Mammary epithelial cell (primary cell): ENCODE measurements at regions of chr11 and their contacts with region 1.

Region 1: DNA sequence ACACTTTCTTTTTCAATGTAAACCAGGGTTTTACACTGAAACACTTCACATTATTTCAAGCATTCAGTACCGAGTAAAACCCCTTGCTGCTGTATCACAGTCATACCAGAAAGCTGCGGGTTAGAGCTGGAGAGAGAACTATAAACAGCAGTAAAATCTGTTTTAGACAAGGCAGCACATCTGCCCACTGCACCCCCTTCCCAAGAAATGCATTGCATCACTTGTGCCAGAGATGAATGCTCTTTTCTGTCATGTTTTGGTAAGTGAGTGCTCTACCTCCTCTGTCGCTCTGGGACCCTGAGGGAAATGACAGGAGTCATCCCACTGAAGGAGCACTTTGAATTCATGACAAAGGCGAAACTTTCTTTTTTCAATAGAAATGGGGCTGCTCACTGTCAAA is 107.2 kb downstream of the MAML2 start:
- DNase-seq: no peak
- H3K4me3 ChIP-seq: no peak overlapping the region
- H3K27ac ChIP-seq: no peak overlapping the region
- H3K4me1 ChIP-seq: peaks cover 19% of the 10 kb centered on the region
- H3K27me3 ChIP-seq: no peaks in the 10 kb centered on the region
- CTCF ChIP-seq: no peak

Region 2: GRCh38 chr11:96122601-96123074 is 113.1 kb before region 1 on chr11:
- CTCF ChIA-PET with region 1: no interaction called
- dilution Hi-C with region 1: no loop called
- in situ Hi-C with region 1: no loop called
- intact Hi-C with region 1: loop called (anchors 5 kb)
- DNase-seq: peak; percentile 98
- H3K4me3 ChIP-seq: no peak overlapping the region
- H3K27ac ChIP-seq: peak overlapping the region; percentile 67
- H3K4me1 ChIP-seq: peaks cover 19% of the 10 kb centered on the region
- H3K27me3 ChIP-seq: no peaks in the 10 kb centered on the region
- CTCF ChIP-seq: peak; percentile 29 to 32

Region 3: GRCh38 chr11:96155627-96156378 is 79.9 kb before region 1 on chr11:
- CTCF ChIA-PET with region 1: no interaction called
- dilution Hi-C with region 1: no loop called
- in situ Hi-C with region 1: no loop called
- intact Hi-C with region 1: no loop called
- DNase-seq: peak; percentile 93
- H3K4me3 ChIP-seq: no peak overlapping the region
- H3K27ac ChIP-seq: peak overlapping the region; percentile 92
- H3K4me1 ChIP-seq: peaks cover 41% of the 10 kb centered on the region
- H3K27me3 ChIP-seq: no peaks in the 10 kb centered on the region
- CTCF ChIP-seq: peak in 1 of 2 donors; percentile 34

Region 4: GRCh38 chr11:96293598-96294021 is 57.9 kb after region 1 on chr11:
- CTCF ChIA-PET with region 1: no interaction called
- dilution Hi-C with region 1: no loop called
- in situ Hi-C with region 1: no loop called
- intact Hi-C with region 1: no loop called
- DNase-seq: no peak
- H3K4me3 ChIP-seq: peak overlapping the region; percentile 5 to 18 (median 8)
- H3K27ac ChIP-seq: peak overlapping the region; percentile 36
- H3K4me1 ChIP-seq: peaks cover 10% of the 10 kb centered on the region
- H3K27me3 ChIP-seq: no peaks in the 10 kb centered on the region
- CTCF ChIP-seq: no peak

Region 5: DNA sequence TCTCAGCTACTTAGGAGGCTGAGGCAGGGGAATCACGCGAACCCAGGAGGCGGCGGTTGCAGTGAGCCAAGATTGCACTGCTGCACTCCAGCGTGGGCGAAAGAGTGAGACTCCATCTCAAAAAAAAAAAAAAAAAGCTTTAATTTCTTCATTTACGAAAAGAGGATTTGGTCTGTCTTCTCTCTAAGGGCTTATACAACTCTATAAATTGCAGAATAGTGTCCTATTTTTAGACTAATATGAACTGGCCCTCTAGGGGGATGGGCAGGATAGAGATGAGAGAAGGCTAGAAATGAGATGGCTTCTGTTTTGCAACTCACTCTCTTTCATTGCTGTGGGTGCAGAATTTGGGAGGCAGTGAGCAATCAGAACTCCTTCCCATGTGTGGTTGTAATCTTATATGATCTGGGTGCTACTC is 96.0 kb after region 1 on chr11:
- CTCF ChIA-PET with region 1: interaction called, 15 read pairs
- dilution Hi-C with region 1: no loop called
- in situ Hi-C with region 1: no loop called
- intact Hi-C with region 1: no loop called
- DNase-seq: no peak
- H3K4me3 ChIP-seq: no peak overlapping the region
- H3K27ac ChIP-seq: no peak overlapping the region
- H3K4me1 ChIP-seq: peaks cover 2% of the 10 kb centered on the region
- H3K27me3 ChIP-seq: no peaks in the 10 kb centered on the region
- CTCF ChIP-seq: no peak